IMR-90 (cell line): ENCODE measurements at regions of chr10 and their contacts with region 1.

Region 1: DNA sequence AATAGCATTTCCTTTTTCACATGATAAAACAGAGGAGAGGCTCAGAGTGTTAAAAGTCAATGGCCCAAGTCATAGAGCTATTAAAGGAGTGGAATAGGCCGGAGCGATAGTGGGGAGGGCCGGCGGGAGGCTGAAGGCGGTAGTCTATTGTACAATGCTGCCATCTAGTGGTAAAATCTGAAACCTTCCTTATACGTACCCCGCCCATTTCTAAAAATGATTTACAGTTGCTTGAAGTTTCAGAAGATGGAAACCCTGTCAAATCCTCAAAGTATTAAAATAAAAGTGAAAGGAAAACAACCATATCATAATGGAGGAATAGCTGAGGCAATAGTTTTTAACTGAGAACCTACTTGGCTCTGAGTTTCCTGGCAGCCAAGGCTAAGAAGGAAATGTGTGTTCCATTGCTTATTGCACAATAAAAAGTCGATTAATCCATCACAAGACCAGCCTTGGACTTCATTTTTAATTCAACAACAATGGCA is 209.1 kb downstream of the CCSER2 start:
- DNase-seq: peak; percentile 59
- ATAC-seq: peak; percentile 63
- H3K4me3 ChIP-seq: no peak overlapping the region
- H3K27ac ChIP-seq: no peak overlapping the region
- H3K4me1 ChIP-seq: peaks cover 8% of the 10 kb centered on the region
- H3K27me3 ChIP-seq: no peaks in the 10 kb centered on the region
- CTCF ChIP-seq: peak; percentile 92
- POLR2A ChIP-seq: no peak
- RAD21 ChIP-seq: peak; percentile 95

Region 2: DNA sequence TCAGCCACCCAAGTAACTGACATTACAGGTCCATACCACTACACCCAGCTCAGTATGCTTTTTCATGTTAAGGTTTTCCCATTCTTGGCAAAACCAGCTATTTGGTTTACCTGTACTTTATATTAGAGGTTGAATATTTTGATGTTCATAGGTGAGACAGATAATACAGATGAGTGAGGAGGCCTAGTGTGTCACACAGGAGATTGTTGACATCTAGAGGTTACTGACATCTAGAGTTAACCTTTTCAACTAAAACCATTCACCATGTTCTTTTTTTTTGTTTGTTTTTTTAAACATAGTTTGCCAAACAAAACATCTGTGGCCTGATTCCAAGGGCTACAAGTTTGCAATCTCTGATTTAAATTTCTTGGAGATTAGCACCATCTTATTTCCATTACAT is 390.1 kb before region 1 on chr10:
- CTCF ChIA-PET with region 1: interaction called, 7 read pairs
- POLR2A ChIA-PET with region 1: no interaction called
- dilution Hi-C with region 1: no loop called
- in situ Hi-C with region 1: loop called (anchors 10 kb)
- intact Hi-C with region 1: loop called (anchors 2 kb)
- DNase-seq: no peak
- ATAC-seq: no peak
- H3K4me3 ChIP-seq: no peak overlapping the region
- H3K27ac ChIP-seq: no peak overlapping the region
- H3K4me1 ChIP-seq: no peaks in the 10 kb centered on the region
- H3K27me3 ChIP-seq: no peaks in the 10 kb centered on the region
- CTCF ChIP-seq: no peak
- POLR2A ChIP-seq: no peak
- RAD21 ChIP-seq: no peak

Region 3: GRCh38 chr10:84352251-84352842 is 185.1 kb before region 1 on chr10:
- CTCF ChIA-PET with region 1: interaction called, 6 read pairs
- POLR2A ChIA-PET with region 1: no interaction called
- dilution Hi-C with region 1: no loop called
- in situ Hi-C with region 1: no loop called
- intact Hi-C with region 1: loop called (anchors 1 kb)
- DNase-seq: peak; percentile 72
- ATAC-seq: peak; percentile 75
- H3K4me3 ChIP-seq: no peak overlapping the region
- H3K27ac ChIP-seq: no peak overlapping the region
- H3K4me1 ChIP-seq: peaks cover 12% of the 10 kb centered on the region
- H3K27me3 ChIP-seq: no peaks in the 10 kb centered on the region
- CTCF ChIP-seq: peak; percentile 74
- POLR2A ChIP-seq: no peak
- RAD21 ChIP-seq: peak; percentile 82

Region 4: GRCh38 chr10:84478151-84478550 is 59.3 kb before region 1 on chr10:
- CTCF ChIA-PET with region 1: no interaction called
- POLR2A ChIA-PET with region 1: no interaction called
- dilution Hi-C with region 1: no loop called
- in situ Hi-C with region 1: no loop called
- intact Hi-C with region 1: no loop called
- DNase-seq: peak; percentile 33
- ATAC-seq: no peak
- H3K4me3 ChIP-seq: no peak overlapping the region
- H3K27ac ChIP-seq: no peak overlapping the region
- H3K4me1 ChIP-seq: no peaks in the 10 kb centered on the region; the same call in 1 of the 2 replicates
- H3K27me3 ChIP-seq: no peaks in the 10 kb centered on the region
- CTCF ChIP-seq: no peak
- POLR2A ChIP-seq: no peak
- RAD21 ChIP-seq: no peak

Region 5: DNA sequence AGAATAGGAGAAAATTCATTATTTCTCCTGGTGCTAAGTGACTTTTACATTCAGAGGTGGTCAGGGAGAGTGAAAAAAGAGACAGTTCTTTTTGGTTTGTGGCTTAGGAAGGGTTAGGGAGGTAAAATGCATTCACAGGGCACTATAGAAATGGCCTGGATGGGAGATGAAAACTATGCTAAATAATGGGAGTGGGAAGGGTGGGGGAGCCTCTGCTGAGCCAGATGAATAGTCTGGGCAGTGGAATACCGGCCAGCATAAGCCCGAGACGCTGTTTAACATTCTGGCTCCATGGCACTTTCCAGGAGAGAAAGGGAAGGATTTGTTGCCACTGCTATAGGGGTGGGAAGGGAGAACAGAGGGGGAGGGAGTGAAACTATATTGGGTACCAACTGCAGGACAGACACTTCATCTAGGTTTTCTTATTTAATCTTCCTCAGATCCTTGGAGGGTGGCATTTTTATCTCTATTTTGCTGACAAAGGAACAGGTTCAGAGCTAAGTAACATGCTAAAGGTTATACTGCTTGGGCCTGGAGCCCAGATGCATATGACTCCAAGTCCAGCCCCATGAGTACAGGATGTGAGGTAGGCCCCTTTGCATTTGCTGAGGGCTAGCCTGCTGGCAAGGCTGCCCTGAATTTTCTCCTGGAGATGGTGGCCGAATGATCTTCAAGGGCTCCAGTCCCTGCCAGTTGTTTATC is 163.3 kb after region 1 on chr10:
- CTCF ChIA-PET with region 1: no interaction called
- POLR2A ChIA-PET with region 1: no interaction called
- dilution Hi-C with region 1: no loop called
- in situ Hi-C with region 1: no loop called
- intact Hi-C with region 1: no loop called
- DNase-seq: no peak
- ATAC-seq: no peak
- H3K4me3 ChIP-seq: no peak overlapping the region
- H3K27ac ChIP-seq: no peak overlapping the region
- H3K4me1 ChIP-seq: no peaks in the 10 kb centered on the region
- H3K27me3 ChIP-seq: no peaks in the 10 kb centered on the region
- CTCF ChIP-seq: no peak
- POLR2A ChIP-seq: no peak
- RAD21 ChIP-seq: no peak

Region 6: GRCh38 chr10:84755311-84755710 is 217.8 kb after region 1 on chr10:
- CTCF ChIA-PET with region 1: no interaction called
- POLR2A ChIA-PET with region 1: no interaction called
- dilution Hi-C with region 1: no loop called
- in situ Hi-C with region 1: no loop called
- intact Hi-C with region 1: no loop called
- DNase-seq: no peak
- ATAC-seq: no peak
- H3K4me3 ChIP-seq: no peak overlapping the region
- H3K27ac ChIP-seq: no peak overlapping the region
- H3K4me1 ChIP-seq: no peaks in the 10 kb centered on the region
- H3K27me3 ChIP-seq: no peaks in the 10 kb centered on the region
- CTCF ChIP-seq: no peak
- POLR2A ChIP-seq: no peak
- RAD21 ChIP-seq: no peak

Region 7: GRCh38 chr10:86371691-86372090 is 1834.2 kb after region 1 on chr10:
- CTCF ChIA-PET with region 1: interaction called, 6 read pairs
- POLR2A ChIA-PET with region 1: no interaction called
- dilution Hi-C with region 1: no loop called
- in situ Hi-C with region 1: loop called (anchors 5 kb)
- intact Hi-C with region 1: no loop called
- DNase-seq: no peak
- ATAC-seq: no peak
- H3K4me3 ChIP-seq: no peak overlapping the region
- H3K27ac ChIP-seq: no peak overlapping the region
- H3K4me1 ChIP-seq: no peaks in the 10 kb centered on the region
- H3K27me3 ChIP-seq: peaks cover 74% of the 10 kb centered on the region
- CTCF ChIP-seq: no peak
- POLR2A ChIP-seq: no peak
- RAD21 ChIP-seq: no peak